PC-9 (cell line): ENCODE measurements at regions of chr20 and their contacts with region 1.

Region 1: DNA sequence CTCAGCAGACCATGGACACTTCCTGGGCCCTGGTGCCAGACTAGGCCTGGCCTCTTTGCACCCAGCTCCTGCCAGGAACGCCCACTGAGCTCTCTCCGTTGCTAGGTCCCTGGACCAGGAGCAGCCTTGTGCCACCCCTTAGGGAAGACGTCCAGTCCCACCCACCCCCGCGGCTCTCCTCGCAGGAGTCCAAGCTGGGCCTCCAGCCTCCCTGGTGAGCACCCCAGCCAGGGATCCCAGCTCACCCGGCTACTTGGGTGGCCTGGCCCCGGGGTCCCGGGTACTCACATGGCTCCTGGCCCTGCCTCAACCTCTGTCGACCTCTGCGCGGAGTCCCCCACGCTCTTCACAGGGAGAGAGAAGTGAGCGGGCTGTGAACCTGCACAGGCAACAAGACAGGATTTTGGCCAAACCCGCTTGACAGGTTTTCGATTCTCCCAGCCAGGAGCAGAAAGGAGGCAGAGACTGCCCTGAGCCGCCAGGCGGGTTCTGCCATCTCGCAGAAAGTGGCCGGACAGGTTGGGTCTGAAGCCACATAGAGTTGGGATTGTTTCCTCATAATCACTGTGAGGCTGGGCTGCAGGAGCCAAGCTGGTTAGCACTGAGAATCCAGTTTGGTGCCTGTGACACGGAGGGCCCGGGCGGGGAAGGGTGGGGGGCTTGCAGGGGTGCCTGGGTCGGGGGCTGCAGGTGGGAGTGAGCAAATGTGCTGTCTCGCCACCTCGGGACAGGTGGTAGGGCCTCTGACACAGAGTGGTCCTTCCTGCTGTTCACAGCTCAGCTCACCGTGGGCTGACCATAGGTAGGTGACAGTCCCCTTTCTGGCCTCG is at the start of gene RBBP8NL:
- DNase-seq: peak; percentile 97 to 98
- H3K4me3 ChIP-seq: peak within 1 kb of the TSS; percentile 64
- H3K27ac ChIP-seq: peak within 1 kb of the TSS; percentile 45
- H3K4me1 ChIP-seq: peaks cover 38% of the 10 kb centered on the region
- H3K27me3 ChIP-seq: no peaks in the 10 kb centered on the region
- CTCF ChIP-seq: peak; percentile 60
- total RNA-seq, gene RBBP8NL: 8.7 and 14.0 TPM in 2 replicates

Region 2: GRCh38 chr20:62482146-62482809 is 54.9 kb after region 1 on chr20:
- CTCF ChIA-PET with region 1: no interaction called
- POLR2A ChIA-PET with region 1: no interaction called
- intact Hi-C with region 1: loop called (anchors 1 kb)
- DNase-seq: peak in 1 of 2 experiments; percentile 79
- H3K4me3 ChIP-seq: no peak overlapping the region
- H3K27ac ChIP-seq: no peak overlapping the region
- H3K4me1 ChIP-seq: 0 out of 2 replicates have a peak, but pooled peaks cover 5% of the 10 kb centered on the region
- H3K27me3 ChIP-seq: peaks cover 76% of the 10 kb centered on the region
- CTCF ChIP-seq: no peak

Region 3: DNA sequence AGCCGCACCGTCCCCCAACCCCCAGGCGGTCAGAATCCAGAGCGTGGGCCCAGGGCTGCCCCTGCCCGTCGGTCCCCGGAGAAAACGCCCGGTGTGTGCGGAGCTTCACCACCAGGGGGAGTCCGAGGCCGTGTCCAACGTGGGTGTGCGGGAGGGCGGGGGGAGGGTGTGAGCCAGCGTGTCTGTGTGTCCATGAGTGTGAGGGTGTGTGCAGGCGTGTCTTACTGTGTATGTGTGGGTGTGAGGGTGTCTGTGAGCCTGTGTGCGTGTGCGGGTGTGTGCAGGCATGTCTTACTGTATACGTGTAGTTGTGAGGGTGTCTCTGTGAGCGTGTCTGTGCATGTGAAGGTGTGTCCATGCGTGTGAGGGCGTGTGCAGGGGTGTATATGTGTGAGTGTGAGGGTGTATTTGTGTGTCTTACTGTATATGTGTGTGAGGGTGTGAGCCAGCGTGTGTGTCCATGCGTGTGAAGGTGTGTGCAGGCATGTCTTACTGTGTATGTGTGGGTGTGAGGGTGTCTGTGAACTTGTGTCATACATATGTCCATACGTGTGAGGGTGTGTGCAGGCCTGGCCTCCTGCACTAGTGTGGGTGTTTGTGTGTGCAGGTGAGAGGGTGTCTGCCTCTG is 73.0 kb after region 1 on chr20:
- CTCF ChIA-PET with region 1: no interaction called
- POLR2A ChIA-PET with region 1: no interaction called
- intact Hi-C with region 1: no loop called
- DNase-seq: peak in 1 of 2 experiments; percentile 72
- H3K4me3 ChIP-seq: no peak overlapping the region
- H3K27ac ChIP-seq: no peak overlapping the region
- H3K4me1 ChIP-seq: no peaks in the 10 kb centered on the region
- H3K27me3 ChIP-seq: no peaks in the 10 kb centered on the region
- CTCF ChIP-seq: peak; percentile 95

Region 4: DNA sequence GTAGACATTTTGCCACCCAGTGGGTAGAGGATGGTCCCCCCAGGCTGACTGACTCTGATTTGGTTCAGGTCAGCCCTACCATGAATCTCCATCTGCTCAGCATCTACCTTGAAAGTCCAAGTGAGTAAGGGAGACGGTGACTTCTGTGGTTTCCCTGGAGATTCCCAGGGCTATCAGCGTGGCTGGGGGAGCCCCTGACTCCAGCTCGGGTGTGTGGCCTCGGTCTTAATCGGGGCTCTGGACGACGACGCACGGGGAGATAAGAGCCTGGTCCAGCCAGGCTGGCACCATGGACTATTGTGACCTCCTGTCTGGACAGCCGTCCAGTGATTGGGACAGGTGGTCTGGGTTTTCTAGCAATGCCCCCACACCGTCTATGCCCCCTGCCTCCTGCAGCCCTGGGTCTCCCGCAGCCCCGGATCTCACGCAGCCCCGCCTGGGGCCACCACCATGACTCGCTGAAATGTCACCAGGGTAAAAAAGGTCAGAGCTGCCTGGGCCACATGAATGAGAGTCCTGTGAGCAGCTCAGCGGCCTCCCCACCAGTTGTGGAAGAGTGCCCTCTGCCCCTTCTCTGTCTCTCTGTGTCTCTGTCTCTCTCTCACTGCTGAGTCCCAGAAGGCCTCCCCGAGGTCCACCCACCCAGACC is 95.5 kb after region 1 on chr20:
- CTCF ChIA-PET with region 1: interaction called, 14 read pairs
- POLR2A ChIA-PET with region 1: no interaction called
- intact Hi-C with region 1: no loop called
- DNase-seq: no peak
- H3K4me3 ChIP-seq: no peak overlapping the region
- H3K27ac ChIP-seq: no peak overlapping the region
- H3K4me1 ChIP-seq: no peaks in the 10 kb centered on the region
- H3K27me3 ChIP-seq: peaks cover 93% of the 10 kb centered on the region
- CTCF ChIP-seq: no peak

Region 5: DNA sequence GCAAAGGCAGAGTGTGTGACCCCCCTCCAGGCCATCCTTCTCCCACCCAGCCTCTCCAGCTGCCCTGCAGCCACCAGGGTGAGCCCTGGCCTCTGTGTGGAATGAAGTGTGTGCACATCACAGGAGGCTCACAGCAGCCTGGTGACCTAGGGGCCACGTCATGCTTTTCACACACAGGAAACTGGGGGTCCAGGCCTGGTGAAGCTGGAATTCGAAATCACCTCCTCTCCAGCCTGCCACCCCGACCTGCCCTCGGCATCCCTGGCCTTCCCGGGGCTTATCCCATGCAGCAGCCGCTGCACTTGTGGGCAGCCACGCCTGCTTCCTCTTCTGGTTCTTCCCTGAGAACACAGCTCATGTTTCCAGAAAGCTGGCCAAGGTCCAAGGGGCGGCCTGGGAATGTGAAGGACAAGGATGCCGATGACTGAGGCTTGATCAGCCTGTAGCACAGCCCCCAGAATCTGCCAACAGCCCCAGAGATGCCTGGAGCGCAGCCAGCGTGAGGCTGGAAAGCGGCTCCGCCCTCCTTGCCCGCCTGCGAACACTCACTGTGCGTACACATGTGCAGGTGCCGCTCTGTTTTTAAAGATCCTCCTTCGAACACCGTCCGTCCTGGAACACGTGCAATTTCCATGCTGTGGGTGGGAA is 277.0 kb after region 1 on chr20:
- CTCF ChIA-PET with region 1: no interaction called
- POLR2A ChIA-PET with region 1: no interaction called
- intact Hi-C with region 1: loop called (anchors 1 kb)
- DNase-seq: peak; percentile 93 to 98
- H3K4me3 ChIP-seq: peak overlapping the region; percentile 32; the same call in 1 of the 2 replicates
- H3K27ac ChIP-seq: peak overlapping the region; percentile 81
- H3K4me1 ChIP-seq: peaks cover 40% of the 10 kb centered on the region
- H3K27me3 ChIP-seq: no peaks in the 10 kb centered on the region
- CTCF ChIP-seq: no peak

Region 6: GRCh38 chr20:62716198-62716940 is 289.0 kb after region 1 on chr20:
- CTCF ChIA-PET with region 1: no interaction called
- POLR2A ChIA-PET with region 1: no interaction called
- intact Hi-C with region 1: no loop called
- DNase-seq: no peak
- H3K4me3 ChIP-seq: no peak overlapping the region
- H3K27ac ChIP-seq: no peak overlapping the region
- H3K4me1 ChIP-seq: peaks cover 7% of the 10 kb centered on the region; the same call in 1 of the 2 replicates
- H3K27me3 ChIP-seq: no peaks in the 10 kb centered on the region
- CTCF ChIP-seq: no peak